Right cardiac atrium (tissue), 5 donors: ENCODE measurements at regions of chr17 and their contacts with region 1.

Region 1: DNA sequence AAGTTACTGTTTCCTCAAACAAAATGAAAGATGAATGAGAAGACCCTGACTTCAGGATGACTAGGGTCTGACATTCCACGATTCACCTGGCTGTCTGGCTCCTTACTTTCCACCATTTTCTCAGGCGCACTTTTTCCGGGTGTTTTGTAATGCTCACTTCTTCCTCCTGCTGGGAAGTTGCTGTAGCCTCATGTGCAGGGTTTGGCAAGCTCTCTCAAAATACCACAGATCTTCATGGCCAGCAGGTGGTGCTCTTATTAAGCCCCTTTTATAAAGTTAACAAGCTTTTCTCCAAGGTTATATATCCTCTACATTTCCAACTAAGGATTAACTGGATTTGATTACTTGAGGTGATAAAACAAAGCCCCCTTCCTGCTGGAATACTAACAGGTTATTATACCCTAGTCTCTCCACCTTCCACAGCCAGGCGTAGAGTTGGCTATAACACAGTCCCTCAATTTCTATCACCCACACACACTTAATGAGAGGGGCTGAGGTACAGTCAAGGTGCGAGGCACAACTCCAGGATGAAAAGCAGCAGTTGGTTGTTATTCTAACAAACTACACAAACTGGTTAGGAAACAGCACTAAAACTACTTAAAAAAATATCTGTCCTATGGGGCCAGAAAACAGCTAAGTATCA is 45.4 kb downstream of the STH start:
- DNase-seq: peak; percentile 63 to 72 (median 66)
- ATAC-seq: peak; percentile 80 to 81
- H3K4me3 ChIP-seq: no peak overlapping the region
- H3K27ac ChIP-seq: no peak overlapping the region
- H3K4me1 ChIP-seq: peaks cover 2% of the 10 kb centered on the region
- H3K27me3 ChIP-seq: no peaks in the 10 kb centered on the region

Region 2: GRCh38 chr17:46082257-46082656 is 37.9 kb after region 1 on chr17:
- intact Hi-C with region 1: no loop called
- DNase-seq: no peak
- ATAC-seq: no peak
- H3K4me3 ChIP-seq: no peak overlapping the region
- H3K27ac ChIP-seq: no peak overlapping the region
- H3K4me1 ChIP-seq: no peaks in the 10 kb centered on the region
- H3K27me3 ChIP-seq: no peaks in the 10 kb centered on the region

Region 3: DNA sequence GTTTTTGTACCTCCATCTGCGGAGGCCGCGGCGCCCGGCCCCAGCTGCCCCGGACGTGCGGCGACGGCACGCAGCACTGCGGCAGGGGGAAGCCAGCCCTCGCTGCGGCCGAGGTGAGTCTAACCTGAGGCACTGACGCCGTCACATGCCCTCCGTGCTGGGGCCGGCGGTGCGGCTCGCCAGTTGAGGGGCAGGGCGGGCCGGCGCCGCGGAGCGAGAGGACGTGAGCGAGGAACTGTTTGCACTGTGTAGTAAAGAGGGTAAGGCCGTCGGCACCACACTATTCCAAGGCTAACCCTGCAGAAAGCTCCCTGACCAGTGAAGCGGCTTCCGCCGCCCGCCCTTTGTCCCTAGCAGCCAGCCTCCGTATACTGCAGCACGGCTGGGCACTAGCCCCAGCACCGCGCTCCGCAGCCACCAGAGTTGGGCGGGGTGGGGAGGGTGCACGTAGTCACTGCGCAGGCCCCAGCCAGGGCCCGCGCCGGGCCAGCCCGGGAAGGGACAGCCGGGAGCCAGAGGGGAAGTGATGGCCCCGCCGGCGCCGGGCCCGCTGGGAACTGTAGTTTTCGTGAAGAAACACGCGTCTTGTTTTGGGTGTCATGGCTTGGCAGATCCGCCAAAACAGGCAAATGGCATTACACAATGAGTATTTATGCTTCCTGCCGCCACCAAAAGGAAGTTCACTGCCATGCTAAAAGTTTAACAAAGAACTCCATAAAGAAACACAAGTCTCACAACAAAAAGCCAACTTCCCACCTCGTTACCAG is 149.4 kb after region 1 on chr17:
- intact Hi-C with region 1: loop called in 3 of 4 experiments (anchors 2 to 10 kb)
- DNase-seq: peak; percentile 98 to 99 (median 99)
- ATAC-seq: peak; percentile 95 to 97
- H3K4me3 ChIP-seq: peak overlapping the region; percentile 100
- H3K27ac ChIP-seq: peak overlapping the region; percentile 80
- H3K4me1 ChIP-seq: peaks cover 4% of the 10 kb centered on the region
- H3K27me3 ChIP-seq: no peaks in the 10 kb centered on the region

Region 4: GRCh38 chr17:46212634-46213435 is 168.4 kb after region 1 on chr17:
- intact Hi-C with region 1: loop called in 2 of 4 experiments (anchors 5 to 10 kb)
- DNase-seq: peak in 2 of 3 donors; percentile 43 to 72
- ATAC-seq: peak; percentile 73 to 82
- H3K4me3 ChIP-seq: no peak overlapping the region
- H3K27ac ChIP-seq: no peak overlapping the region
- H3K4me1 ChIP-seq: no peaks in the 10 kb centered on the region
- H3K27me3 ChIP-seq: no peaks in the 10 kb centered on the region